IMR-90 (cell line): ENCODE measurements at regions of chr2 and their contacts with region 1.

Region 1: GRCh38 chr2:20051532-20052228 is at the start of gene LAPTM4A:
- DNase-seq: peak; percentile 100
- ATAC-seq: peak; percentile 95
- H3K4me3 ChIP-seq: peak within 1 kb of the TSS; percentile 77
- H3K27ac ChIP-seq: peak within 1 kb of the TSS; percentile 97
- H3K4me1 ChIP-seq: peaks cover 2% of the 10 kb centered on the region; the same call in 1 of the 2 replicates
- H3K27me3 ChIP-seq: no peaks in the 10 kb centered on the region
- CTCF ChIP-seq: no peak
- POLR2A ChIP-seq: peak; percentile 93
- RAD21 ChIP-seq: peak; percentile 16; the same call in 1 of the 2 replicates
- total RNA-seq, gene LAPTM4A: 97.7 and 221 TPM in 2 replicates

Region 2: DNA sequence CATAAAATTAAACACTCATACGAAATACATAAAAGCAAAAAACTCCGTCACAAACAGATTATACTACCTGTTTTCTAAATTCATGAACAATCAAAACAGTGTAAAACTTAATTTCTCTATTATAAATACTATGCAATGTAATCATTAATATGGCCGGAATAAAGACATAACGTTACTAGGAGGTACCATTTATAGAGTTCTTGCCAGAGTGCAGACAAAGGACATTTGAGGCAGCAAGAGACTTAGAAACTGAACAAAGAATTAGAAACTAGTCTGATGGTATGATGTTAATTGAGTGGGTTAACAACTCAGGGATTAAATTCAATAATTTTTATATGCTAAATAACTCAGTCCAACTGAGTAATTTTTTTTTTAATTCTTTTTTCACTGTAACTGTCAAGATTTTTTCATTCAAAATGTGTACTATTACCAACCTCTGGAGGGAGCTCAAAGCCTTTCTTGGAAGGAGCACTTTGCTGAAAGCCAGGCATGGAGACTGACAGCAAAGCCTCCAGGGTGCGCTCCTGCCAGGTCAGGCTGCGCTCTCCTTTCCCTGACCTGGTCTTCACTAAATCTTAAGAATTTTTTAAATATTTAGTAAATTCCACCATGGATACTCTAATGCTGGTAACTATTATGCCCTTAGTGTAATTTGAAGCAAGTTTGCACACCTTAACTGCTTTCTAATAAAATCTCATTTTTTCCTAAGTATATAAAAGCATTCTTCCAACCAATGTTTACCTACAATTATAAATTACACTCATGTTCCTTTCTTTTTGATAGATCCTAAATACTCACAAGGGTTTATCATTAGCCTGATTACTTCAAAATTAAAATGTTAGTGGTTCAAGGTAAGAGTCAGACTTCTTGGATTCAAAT is 95.9 kb before region 1 on chr2:
- CTCF ChIA-PET with region 1: no interaction called
- POLR2A ChIA-PET with region 1: no interaction called
- dilution Hi-C with region 1: no loop called
- in situ Hi-C with region 1: no loop called
- intact Hi-C with region 1: loop called (anchors 5 kb)
- DNase-seq: peak; percentile 77
- ATAC-seq: peak; percentile 99
- H3K4me3 ChIP-seq: no peak overlapping the region
- H3K27ac ChIP-seq: no peak overlapping the region
- H3K4me1 ChIP-seq: no peaks in the 10 kb centered on the region
- H3K27me3 ChIP-seq: no peaks in the 10 kb centered on the region
- CTCF ChIP-seq: peak; percentile 99
- POLR2A ChIP-seq: 0 out of 2 replicates have a peak, but pooled peaks have one; percentile 37
- RAD21 ChIP-seq: peak; percentile 93

Region 3: DNA sequence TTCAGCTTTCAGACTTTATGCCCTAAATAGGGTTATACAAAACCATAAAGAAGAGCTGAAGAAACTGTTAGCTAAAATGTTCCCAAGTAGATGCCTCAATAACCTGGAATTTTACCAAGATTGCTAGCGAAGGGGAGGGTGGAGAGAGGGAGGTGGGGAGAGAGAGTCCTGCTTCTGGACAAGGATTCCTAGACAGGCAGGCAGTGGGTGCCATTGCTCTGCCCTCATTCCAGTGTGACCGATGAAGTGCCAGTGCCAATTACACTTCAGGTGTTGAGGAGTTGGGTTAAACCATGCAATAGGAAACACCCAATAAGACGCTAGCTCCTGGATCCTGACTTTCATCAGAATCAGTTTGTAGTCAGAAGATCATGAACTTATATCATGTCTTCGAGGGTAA is 18.3 kb before region 1 on chr2:
- CTCF ChIA-PET with region 1: interaction called, 5 read pairs
- POLR2A ChIA-PET with region 1: interaction called, 15 read pairs
- dilution Hi-C with region 1: no loop called
- in situ Hi-C with region 1: no loop called
- intact Hi-C with region 1: no loop called
- DNase-seq: no peak
- ATAC-seq: no peak
- H3K4me3 ChIP-seq: no peak overlapping the region
- H3K27ac ChIP-seq: no peak overlapping the region
- H3K4me1 ChIP-seq: 0 out of 2 replicates have a peak, but pooled peaks cover 1% of the 10 kb centered on the region
- H3K27me3 ChIP-seq: no peaks in the 10 kb centered on the region
- CTCF ChIP-seq: no peak
- POLR2A ChIP-seq: no peak
- RAD21 ChIP-seq: no peak

Region 4: GRCh38 chr2:20062615-20063545 is 11.2 kb after region 1 on chr2:
- CTCF ChIA-PET with region 1: interaction called, 9 read pairs
- POLR2A ChIA-PET with region 1: interaction called, 18 read pairs
- dilution Hi-C with region 1: no loop called
- in situ Hi-C with region 1: no loop called
- intact Hi-C with region 1: loop called (anchors 1 kb)
- DNase-seq: peak; percentile 99
- ATAC-seq: peak; percentile 94
- H3K4me3 ChIP-seq: no peak overlapping the region
- H3K27ac ChIP-seq: peak overlapping the region; percentile 86
- H3K4me1 ChIP-seq: peaks cover 23% of the 10 kb centered on the region
- H3K27me3 ChIP-seq: no peaks in the 10 kb centered on the region
- CTCF ChIP-seq: 0 out of 2 replicates have a peak, but pooled peaks have one; percentile 19
- POLR2A ChIP-seq: no peak
- RAD21 ChIP-seq: peak; percentile 1; the same call in 1 of the 2 replicates

Region 5: DNA sequence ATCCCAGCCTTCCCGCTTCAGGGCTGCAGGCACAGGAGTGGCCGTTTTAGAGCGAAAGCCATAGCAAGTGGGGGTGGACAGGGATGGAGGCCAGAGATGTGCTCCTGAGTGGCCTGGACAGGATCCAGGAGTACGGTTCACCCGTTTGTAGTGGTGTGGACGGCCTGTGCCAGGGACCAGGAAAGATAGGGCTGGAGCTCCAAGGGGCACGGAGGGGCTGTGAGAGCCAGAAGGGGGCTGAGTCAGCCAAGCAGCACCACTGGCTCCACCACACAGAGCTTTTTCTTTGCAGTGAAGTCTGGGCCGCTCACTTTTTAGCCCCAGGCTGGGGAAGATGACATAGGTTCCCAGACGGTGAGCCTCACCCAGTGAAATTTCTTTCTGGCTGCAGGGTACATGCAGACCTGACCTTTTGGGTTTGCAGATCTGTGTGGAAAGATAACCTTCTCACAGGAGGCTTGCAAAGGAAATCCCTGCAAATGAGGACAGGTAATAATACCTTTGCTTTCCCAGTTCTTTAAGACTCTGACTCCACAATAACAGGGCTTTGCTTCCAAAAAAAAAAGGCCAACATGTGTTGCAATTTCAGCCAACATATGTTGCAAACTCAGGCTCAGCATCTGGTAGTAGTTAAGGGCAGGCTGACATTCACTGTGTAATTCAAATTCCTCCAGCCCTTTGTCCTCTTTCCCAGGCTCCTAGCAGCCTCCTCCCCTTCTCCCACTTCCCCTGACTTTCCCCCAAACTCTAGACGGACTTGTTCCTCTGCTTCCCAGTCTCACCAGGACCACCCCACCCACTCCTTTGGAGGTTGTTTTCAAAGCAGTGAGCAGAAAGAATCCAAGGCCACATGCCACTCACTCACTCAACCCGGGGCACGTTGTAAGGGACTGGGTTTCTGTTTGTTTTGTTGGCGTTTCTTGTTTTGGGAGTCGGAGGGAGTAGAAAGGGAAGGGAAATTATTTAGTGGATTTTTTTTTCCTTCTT is 20.0 kb after region 1 on chr2:
- CTCF ChIA-PET with region 1: interaction called, 3 read pairs
- POLR2A ChIA-PET with region 1: interaction called, 3 read pairs
- dilution Hi-C with region 1: no loop called
- in situ Hi-C with region 1: no loop called
- intact Hi-C with region 1: loop called (anchors 1 kb)
- DNase-seq: peak; percentile 98
- ATAC-seq: peak; percentile 65
- H3K4me3 ChIP-seq: peak overlapping the region; percentile 5
- H3K27ac ChIP-seq: peak overlapping the region; percentile 99
- H3K4me1 ChIP-seq: peaks cover 27% of the 10 kb centered on the region
- H3K27me3 ChIP-seq: no peaks in the 10 kb centered on the region
- CTCF ChIP-seq: no peak
- POLR2A ChIP-seq: peak; percentile 58
- RAD21 ChIP-seq: no peak

Region 6: DNA sequence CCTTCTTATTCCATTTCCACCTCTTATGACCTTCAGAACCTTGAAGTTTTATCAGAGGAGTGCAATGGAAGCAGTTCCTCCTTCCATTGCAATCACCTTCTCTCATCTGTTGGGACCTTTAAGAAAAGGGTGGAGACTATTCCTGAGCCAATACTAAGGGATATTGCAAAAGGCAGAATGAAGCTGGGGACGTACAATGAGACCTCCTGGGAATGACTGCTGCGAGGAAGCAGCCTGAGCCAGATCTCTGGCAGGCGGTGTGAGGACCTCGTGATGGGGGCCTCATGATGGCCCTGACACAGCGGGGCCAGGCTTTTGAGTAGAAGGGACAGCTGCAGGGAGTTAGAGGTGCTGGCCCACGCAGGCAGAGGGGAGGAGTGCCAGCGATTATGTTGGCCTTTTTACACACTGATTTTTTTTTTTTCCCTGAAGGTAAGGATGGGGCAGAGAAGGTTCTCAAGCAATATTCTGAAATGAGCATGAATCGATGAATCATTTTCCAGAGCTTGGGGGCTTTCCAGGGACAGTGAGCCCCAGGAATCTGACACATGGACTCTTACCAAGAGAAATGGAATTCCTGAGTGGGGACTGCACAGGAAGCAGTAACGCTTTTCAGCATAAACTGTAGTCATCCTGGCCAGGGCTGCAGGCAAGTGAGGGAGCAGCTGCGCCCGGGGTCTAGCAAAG is 39.8 kb after region 1 on chr2:
- CTCF ChIA-PET with region 1: interaction called, 5 read pairs
- POLR2A ChIA-PET with region 1: interaction called, 7 read pairs
- dilution Hi-C with region 1: no loop called
- in situ Hi-C with region 1: no loop called
- intact Hi-C with region 1: loop called (anchors 1 kb)
- DNase-seq: peak; percentile 97
- ATAC-seq: peak; percentile 68
- H3K4me3 ChIP-seq: peak overlapping the region; percentile 2; the same call in 1 of the 2 replicates
- H3K27ac ChIP-seq: peak overlapping the region; percentile 95
- H3K4me1 ChIP-seq: peaks cover 40% of the 10 kb centered on the region
- H3K27me3 ChIP-seq: no peaks in the 10 kb centered on the region
- CTCF ChIP-seq: no peak
- POLR2A ChIP-seq: peak; percentile 55
- RAD21 ChIP-seq: peak; percentile 29; the same call in 1 of the 2 replicates

Region 7: GRCh38 chr2:20097879-20098714 is 46.4 kb after region 1 on chr2:
- CTCF ChIA-PET with region 1: interaction called, 5 read pairs
- POLR2A ChIA-PET with region 1: interaction called, 7 read pairs
- dilution Hi-C with region 1: no loop called
- in situ Hi-C with region 1: no loop called
- intact Hi-C with region 1: loop called (anchors 2 kb)
- DNase-seq: peak; percentile 85
- ATAC-seq: peak; percentile 85
- H3K4me3 ChIP-seq: no peak overlapping the region
- H3K27ac ChIP-seq: no peak overlapping the region
- H3K4me1 ChIP-seq: peaks cover 18% of the 10 kb centered on the region
- H3K27me3 ChIP-seq: no peaks in the 10 kb centered on the region
- CTCF ChIP-seq: peak; percentile 96
- POLR2A ChIP-seq: peak; percentile 52; the same call in 1 of the 2 replicates
- RAD21 ChIP-seq: peak; percentile 99